Activated B cell treated with CpG ODN at 0.5 μM for 24 hours (primary cell): ENCODE measurements at regions of chr11 and their contacts with region 1.

Region 1: DNA sequence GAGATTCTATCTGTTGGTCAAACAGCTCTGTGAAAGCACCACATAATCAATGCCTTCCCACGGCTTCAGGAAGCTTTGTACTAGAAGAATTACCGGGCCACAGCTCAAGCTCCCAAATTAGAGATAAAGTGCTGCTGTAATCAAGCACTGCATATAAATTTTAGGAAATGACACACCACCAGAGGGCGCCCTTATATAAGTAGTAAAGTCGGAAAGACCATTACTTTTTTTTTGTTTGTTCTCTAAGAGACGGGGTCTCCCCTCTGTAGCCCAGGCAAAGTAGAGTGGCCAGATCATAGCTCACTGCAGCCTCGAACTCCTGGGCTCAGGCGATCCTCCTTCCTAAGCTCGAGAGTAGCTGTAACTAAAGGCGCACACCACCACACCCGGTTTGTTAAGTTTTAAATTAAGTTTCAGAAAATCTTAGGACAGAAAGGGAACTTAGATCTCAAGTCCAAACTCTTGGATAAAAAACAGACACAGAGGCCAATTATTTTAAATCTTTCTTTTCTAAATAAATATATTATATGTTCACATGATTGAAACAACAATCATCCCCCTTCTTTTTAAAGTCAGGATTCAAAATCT is 32.6 kb downstream of the PRCP start:
- DNase-seq: peak; percentile 37
- ATAC-seq: peak; percentile 61
- H3K4me3 Mint-ChIP-seq: peak overlapping the region; percentile 73
- H3K27ac Mint-ChIP-seq: peak overlapping the region; percentile 71
- H3K4me1 Mint-ChIP-seq: peaks cover 9% of the 10 kb centered on the region
- H3K27me3 Mint-ChIP-seq: no peaks in the 10 kb centered on the region
- CTCF ChIP-seq: peak; percentile 50

Region 2: DNA sequence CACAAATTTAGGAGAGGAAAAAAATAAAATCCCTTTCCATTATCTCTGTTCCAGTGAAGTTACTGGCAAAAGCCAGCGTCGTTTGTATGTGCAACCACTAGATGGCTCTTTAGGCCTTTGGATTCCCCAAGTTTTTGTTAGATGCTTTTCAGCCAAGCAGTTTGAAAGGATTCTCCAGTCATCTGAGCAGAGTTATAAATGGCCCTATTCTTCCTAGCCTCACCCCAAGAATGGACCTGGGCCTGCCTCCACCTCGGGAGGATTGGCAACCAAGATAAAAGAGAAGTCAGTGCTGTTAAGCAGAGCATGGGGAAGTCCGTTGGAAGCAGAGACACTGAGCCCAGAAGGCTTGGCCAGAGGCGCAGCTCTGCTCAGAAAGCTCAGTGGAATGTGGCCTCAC is 149.3 kb before region 1 on chr11:
- CTCF ChIA-PET with region 1: no interaction called
- POLR2A ChIA-PET with region 1: no interaction called
- intact Hi-C with region 1: loop called (anchors 1 kb)
- DNase-seq: no peak
- ATAC-seq: no peak
- H3K4me3 Mint-ChIP-seq: no peak overlapping the region
- H3K27ac Mint-ChIP-seq: no peak overlapping the region
- H3K4me1 Mint-ChIP-seq: no peaks in the 10 kb centered on the region
- H3K27me3 Mint-ChIP-seq: peaks cover 6% of the 10 kb centered on the region
- CTCF ChIP-seq: peak; percentile 36

Region 3: GRCh38 chr11:82900277-82901164 is 32.9 kb after region 1 on chr11 and contains the start of gene PRCP:
- CTCF ChIA-PET with region 1: interaction called, 39 read pairs
- POLR2A ChIA-PET with region 1: interaction called, 7 read pairs
- intact Hi-C with region 1: loop called (anchors 1 kb)
- DNase-seq: peak; percentile 78
- ATAC-seq: peak; percentile 75
- H3K4me3 Mint-ChIP-seq: peak within 1 kb of the TSS; percentile 100
- H3K27ac Mint-ChIP-seq: peak within 1 kb of the TSS; percentile 99
- H3K4me1 Mint-ChIP-seq: peaks cover 57% of the 10 kb centered on the region
- H3K27me3 Mint-ChIP-seq: no peaks in the 10 kb centered on the region
- CTCF ChIP-seq: no peak
- total RNA-seq, gene PRCP: 29.8 and 34.8 TPM in 2 replicates

Region 4: GRCh38 chr11:82927254-82927880 is 59.8 kb after region 1 on chr11:
- CTCF ChIA-PET with region 1: interaction called, 6 read pairs
- POLR2A ChIA-PET with region 1: no interaction called
- intact Hi-C with region 1: loop called (anchors 1 kb)
- DNase-seq: no peak
- ATAC-seq: peak; percentile 76
- H3K4me3 Mint-ChIP-seq: peak overlapping the region; percentile 45
- H3K27ac Mint-ChIP-seq: peak overlapping the region; percentile 75
- H3K4me1 Mint-ChIP-seq: peaks cover 85% of the 10 kb centered on the region
- H3K27me3 Mint-ChIP-seq: no peaks in the 10 kb centered on the region
- CTCF ChIP-seq: no peak

Region 5: DNA sequence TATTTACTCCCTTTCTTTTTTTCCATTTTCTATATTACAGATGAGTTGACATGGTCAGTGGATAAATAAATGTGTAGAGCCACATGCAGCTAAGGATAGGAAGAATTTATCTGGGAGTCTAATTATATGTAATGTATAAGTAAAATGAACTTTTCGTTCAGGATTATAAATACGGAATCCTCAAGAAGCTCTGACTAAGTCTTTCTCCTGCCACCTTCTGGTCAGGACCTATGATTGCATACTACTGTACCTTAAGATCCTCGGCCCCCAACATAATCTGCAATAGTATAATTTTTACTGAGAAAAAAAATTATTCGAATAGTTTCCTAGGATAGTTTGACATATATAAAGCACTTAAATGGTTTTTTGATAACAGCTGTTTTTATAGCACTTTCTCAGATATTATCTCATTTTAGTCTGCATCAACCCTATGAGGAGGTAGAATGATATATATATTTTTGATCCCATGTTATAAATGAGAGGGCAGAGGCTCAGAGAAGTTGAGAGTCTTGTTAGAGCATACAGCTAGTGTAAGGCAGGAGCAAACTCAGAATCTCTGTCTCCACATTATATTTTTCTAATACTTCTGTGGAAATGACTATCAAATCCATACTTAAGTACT is 382.5 kb after region 1 on chr11:
- CTCF ChIA-PET with region 1: interaction called, 99 read pairs
- POLR2A ChIA-PET with region 1: interaction called, 5 read pairs
- intact Hi-C with region 1: loop called (anchors 1 kb)
- DNase-seq: no peak
- ATAC-seq: peak; percentile 75
- H3K4me3 Mint-ChIP-seq: no peak overlapping the region
- H3K27ac Mint-ChIP-seq: no peak overlapping the region
- H3K4me1 Mint-ChIP-seq: peaks cover 13% of the 10 kb centered on the region
- H3K27me3 Mint-ChIP-seq: no peaks in the 10 kb centered on the region
- CTCF ChIP-seq: peak; percentile 90

Region 6: DNA sequence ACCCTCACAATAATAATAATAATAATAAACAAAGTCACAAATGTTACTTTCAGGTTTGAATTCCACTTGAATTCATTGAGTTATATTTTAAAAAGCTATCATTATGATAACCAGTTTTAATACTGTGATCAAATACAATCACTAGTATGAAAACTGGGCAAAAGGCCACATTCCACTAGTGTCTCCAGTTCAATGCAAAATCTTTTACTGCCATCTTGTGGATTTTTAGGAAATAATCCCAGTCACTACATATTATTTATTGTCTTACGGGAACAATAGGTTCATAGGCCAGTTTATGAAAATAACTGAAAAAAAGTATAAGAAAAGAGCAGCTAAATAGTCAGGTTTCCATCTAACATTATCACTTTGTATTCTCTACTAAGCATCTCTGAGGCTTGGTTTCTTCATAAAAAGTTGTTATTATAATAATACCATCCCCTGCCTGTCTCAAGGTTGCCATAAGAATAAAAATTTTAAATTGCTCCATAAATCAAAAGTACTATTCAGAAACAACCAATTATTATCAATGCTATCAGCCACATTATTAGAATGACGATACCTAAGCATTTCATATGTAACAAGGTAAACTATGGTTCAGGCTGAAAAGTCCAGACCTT is 952.5 kb after region 1 on chr11:
- CTCF ChIA-PET with region 1: interaction called, 16 read pairs
- POLR2A ChIA-PET with region 1: no interaction called
- intact Hi-C with region 1: loop called (anchors 1 kb)
- DNase-seq: no peak
- ATAC-seq: no peak
- H3K4me3 Mint-ChIP-seq: no peak overlapping the region
- H3K27ac Mint-ChIP-seq: no peak overlapping the region
- H3K4me1 Mint-ChIP-seq: no peaks in the 10 kb centered on the region
- H3K27me3 Mint-ChIP-seq: peaks cover 9% of the 10 kb centered on the region
- CTCF ChIP-seq: no peak